WTC11 (cell line): ENCODE measurements at regions of chr2 and their contacts with region 1.

Region 1: DNA sequence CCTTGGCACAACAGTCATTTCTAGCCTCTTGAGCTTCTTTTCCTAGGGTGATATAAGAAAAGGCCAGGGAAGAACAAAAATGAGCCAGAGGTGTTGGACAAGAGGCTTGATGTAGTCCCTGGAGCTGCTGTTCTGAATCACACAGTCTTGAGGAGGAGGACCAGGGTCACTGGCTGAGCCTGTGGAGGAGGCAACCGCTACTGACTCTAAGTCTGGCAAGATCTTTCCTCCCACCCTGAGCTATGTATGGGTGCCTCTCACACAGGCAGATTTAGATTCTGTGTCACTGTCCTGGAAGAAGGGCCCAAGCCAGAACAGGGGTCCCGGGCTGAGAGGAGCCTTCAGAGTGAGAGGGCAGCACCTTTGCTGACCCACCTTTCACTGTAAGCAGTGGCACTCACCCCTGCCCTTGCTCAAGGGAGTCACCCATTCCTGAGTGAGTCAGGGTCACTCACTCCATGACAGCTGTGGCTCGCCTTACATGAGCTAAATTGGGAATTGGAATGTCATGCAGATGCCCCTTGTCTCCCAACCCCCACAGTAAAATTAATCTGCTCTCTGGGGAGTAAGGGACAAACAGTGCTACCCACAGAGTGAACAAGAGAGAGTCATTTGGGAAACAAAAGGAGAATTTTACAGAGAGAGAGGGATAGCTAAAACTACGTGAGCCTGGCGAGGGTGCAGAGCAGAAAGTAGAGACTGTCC is at the start of gene TRIM54:
- DNase-seq: no peak
- ATAC-seq: peak; percentile 59
- H3K4me3 Mint-ChIP-seq: peak within 1 kb of the TSS; percentile 54
- H3K27ac Mint-ChIP-seq: peak within 1 kb of the TSS; percentile 35
- H3K4me1 Mint-ChIP-seq: peaks cover 46% of the 10 kb centered on the region
- H3K27me3 Mint-ChIP-seq: no peaks in the 10 kb centered on the region; the same call in 1 of the 2 replicates
- CTCF ChIP-seq: no peak
- total RNA-seq, gene TRIM54: 3.0 to 3.4 TPM (median 3.3 TPM) in 3 replicates

Region 2: DNA sequence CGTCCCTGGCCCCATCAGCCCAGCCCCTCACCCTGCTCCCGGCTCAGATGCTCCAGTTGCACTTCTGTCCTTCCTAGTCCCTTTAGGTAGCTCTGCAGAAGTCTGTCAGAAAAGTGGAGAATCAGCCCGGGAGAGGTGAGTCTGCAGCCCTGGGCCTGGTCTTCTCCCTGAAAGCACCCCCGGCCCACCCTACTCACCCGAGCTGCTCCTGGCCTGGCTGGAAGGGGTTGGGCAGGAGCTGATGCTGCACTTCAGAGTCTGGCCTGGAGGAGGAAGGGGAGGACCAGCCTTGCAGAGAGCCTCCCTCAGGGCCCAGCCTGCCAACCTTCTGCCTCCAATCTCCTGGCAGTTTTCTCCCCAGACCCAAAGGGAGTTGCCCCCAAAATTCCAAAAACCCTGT is 179.7 kb before region 1 on chr2:
- CTCF ChIA-PET with region 1: interaction called, 11 read pairs
- POLR2A ChIA-PET with region 1: no interaction called
- DNase-seq: no peak
- ATAC-seq: no peak; the same call in 1 of the 2 replicates
- H3K4me3 Mint-ChIP-seq: no peak overlapping the region
- H3K27ac Mint-ChIP-seq: no peak overlapping the region
- H3K4me1 Mint-ChIP-seq: no peaks in the 10 kb centered on the region
- H3K27me3 Mint-ChIP-seq: 0 out of 2 replicates have a peak, but pooled peaks cover 5% of the 10 kb centered on the region
- CTCF ChIP-seq: no peak

Region 3: DNA sequence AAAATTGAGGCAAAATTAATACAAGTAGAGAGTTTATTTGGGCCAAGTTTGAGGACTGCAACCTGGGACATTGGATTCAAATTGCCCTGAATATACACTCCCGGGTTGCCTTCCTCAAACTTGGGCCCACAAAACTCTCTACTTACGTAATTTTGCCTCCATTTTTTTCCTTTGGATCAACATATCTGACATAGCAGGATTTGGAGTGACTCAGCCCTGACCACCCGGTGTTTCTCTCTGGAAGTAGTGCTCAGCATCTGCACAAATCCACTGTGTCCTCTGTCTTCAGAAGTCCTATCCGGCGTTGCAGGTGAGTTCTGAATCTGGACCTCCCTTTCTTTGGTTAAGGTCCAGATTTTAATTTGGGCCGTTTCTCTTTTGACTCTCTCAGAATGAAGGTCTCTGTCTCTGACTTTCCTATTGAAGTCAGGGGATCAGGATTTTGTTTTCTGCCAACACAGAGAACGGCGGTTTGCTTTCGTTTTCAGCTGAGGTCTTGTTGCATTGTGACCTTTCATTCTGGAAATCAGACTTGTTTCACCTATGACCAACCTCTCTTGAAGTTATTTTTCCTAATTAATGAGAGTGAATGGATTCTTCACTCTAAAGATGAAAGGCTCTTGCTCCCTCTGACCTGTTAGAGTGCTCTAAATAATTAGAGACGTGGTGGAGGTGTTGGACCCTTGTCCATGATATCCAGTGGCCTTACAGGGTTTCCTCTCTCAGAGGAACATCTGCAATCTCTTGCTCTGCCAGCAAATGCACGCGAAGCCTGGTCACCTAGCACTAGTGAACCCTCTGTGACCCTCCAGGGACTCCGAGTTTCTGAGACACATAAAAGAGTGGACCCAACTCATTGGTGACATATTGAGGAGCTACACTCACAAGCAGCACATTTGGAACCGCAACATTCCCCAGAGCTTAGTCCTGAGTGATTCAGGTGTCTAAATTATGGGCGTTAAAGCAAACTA is 119.6 kb before region 1 on chr2:
- CTCF ChIA-PET with region 1: no interaction called
- POLR2A ChIA-PET with region 1: no interaction called
- DNase-seq: no peak
- ATAC-seq: no peak
- H3K4me3 Mint-ChIP-seq: no peak overlapping the region
- H3K27ac Mint-ChIP-seq: no peak overlapping the region
- H3K4me1 Mint-ChIP-seq: peaks cover 24% of the 10 kb centered on the region
- H3K27me3 Mint-ChIP-seq: no peaks in the 10 kb centered on the region
- CTCF ChIP-seq: no peak

Region 4: DNA sequence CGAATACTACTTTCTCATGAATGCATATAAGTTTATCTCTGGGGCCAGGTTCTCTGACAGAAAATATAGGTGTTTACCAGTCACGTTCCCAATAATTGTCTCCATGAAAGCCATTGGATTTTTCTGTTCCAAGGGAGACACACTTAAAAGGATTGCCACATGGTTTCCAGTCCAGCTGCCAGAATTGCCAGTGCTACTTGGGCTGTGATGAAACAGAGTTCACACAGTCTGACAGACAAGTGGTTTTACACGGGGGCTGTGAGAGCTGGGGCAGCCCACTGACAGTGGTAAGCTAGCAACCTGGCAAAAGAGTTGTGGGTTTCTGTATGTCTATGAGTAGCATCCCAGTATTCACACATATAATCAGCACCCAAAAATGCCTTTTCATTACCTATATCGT is 97.9 kb before region 1 on chr2:
- CTCF ChIA-PET with region 1: no interaction called
- POLR2A ChIA-PET with region 1: no interaction called
- DNase-seq: no peak
- ATAC-seq: no peak
- H3K4me3 Mint-ChIP-seq: no peak overlapping the region
- H3K27ac Mint-ChIP-seq: no peak overlapping the region
- H3K4me1 Mint-ChIP-seq: no peaks in the 10 kb centered on the region
- H3K27me3 Mint-ChIP-seq: peaks cover 6% of the 10 kb centered on the region
- CTCF ChIP-seq: no peak

Region 5: GRCh38 chr2:27249891-27250651 is 31.9 kb before region 1 on chr2:
- CTCF ChIA-PET with region 1: interaction called, 106 read pairs
- POLR2A ChIA-PET with region 1: interaction called, 6 read pairs
- DNase-seq: peak; percentile 89
- ATAC-seq: peak; percentile 86
- H3K4me3 Mint-ChIP-seq: peak overlapping the region; percentile 63
- H3K27ac Mint-ChIP-seq: no peak overlapping the region
- H3K4me1 Mint-ChIP-seq: peaks cover 18% of the 10 kb centered on the region
- H3K27me3 Mint-ChIP-seq: peaks cover 7% of the 10 kb centered on the region
- CTCF ChIP-seq: peak; percentile 56; the same call in 1 of the 2 replicates

Region 6: DNA sequence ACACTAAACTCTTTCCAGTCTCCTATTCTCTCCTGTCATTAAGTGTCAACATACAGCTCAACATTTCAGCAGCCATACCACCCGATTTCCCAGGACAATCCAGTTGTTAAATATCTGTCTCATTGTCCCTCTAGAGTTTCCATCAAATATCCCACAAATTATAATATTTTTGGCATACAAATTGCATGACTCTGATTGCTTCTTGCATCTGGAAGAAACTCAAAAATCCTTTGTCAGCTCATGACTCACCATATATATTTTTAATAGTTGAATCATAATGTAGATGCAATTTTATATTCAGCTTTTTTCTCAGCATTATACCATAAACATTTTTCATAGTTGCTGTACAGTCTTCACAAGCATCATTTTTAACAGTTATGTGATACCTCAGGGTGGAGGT is 26.3 kb before region 1 on chr2:
- CTCF ChIA-PET with region 1: interaction called, 106 read pairs
- POLR2A ChIA-PET with region 1: no interaction called
- DNase-seq: no peak
- ATAC-seq: no peak
- H3K4me3 Mint-ChIP-seq: no peak overlapping the region
- H3K27ac Mint-ChIP-seq: no peak overlapping the region
- H3K4me1 Mint-ChIP-seq: peaks cover 15% of the 10 kb centered on the region
- H3K27me3 Mint-ChIP-seq: peaks cover 24% of the 10 kb centered on the region
- CTCF ChIP-seq: no peak

Region 7: GRCh38 chr2:27264753-27265535 is 17.1 kb before region 1 on chr2:
- CTCF ChIA-PET with region 1: interaction called, 124 read pairs
- POLR2A ChIA-PET with region 1: no interaction called
- DNase-seq: peak; percentile 86
- ATAC-seq: peak; percentile 57
- H3K4me3 Mint-ChIP-seq: peak overlapping the region; percentile 93
- H3K27ac Mint-ChIP-seq: no peak overlapping the region
- H3K4me1 Mint-ChIP-seq: peaks cover 26% of the 10 kb centered on the region
- H3K27me3 Mint-ChIP-seq: peaks cover 27% of the 10 kb centered on the region
- CTCF ChIP-seq: peak; percentile 46; the same call in 1 of the 2 replicates

Region 8: GRCh38 chr2:27271631-27272340 is 10.2 kb before region 1 on chr2:
- CTCF ChIA-PET with region 1: interaction called, 124 read pairs
- POLR2A ChIA-PET with region 1: interaction called, 3 read pairs
- DNase-seq: no peak
- ATAC-seq: no peak
- H3K4me3 Mint-ChIP-seq: no peak overlapping the region
- H3K27ac Mint-ChIP-seq: no peak overlapping the region
- H3K4me1 Mint-ChIP-seq: peaks cover 6% of the 10 kb centered on the region; the same call in 1 of the 2 replicates
- H3K27me3 Mint-ChIP-seq: peaks cover 7% of the 10 kb centered on the region
- CTCF ChIP-seq: no peak

Region 9: GRCh38 chr2:27308359-27308881 is 26.4 kb after region 1 on chr2 and contains the start of gene UCN:
- CTCF ChIA-PET with region 1: interaction called, 129 read pairs
- POLR2A ChIA-PET with region 1: no interaction called
- DNase-seq: peak; percentile 79
- ATAC-seq: peak; percentile 67
- H3K4me3 Mint-ChIP-seq: peak within 1 kb of the TSS; percentile 62
- H3K27ac Mint-ChIP-seq: no peak within 1 kb of the TSS
- H3K4me1 Mint-ChIP-seq: peaks cover 3% of the 10 kb centered on the region; the same call in 1 of the 2 replicates
- H3K27me3 Mint-ChIP-seq: peaks cover 53% of the 10 kb centered on the region
- CTCF ChIP-seq: no peak
- total RNA-seq, gene UCN: 0.68 to 1.2 TPM (median 0.71 TPM) in 3 replicates